Right ventricle myocardium inferior (tissue), 1 donor: ENCODE measurements at regions of chr17 and their contacts with region 1.

Region 1: GRCh38 chr17:46212634-46213435 is 19.6 kb upstream of the KANSL1 start:
- DNase-seq: no peak
- ATAC-seq: peak; percentile 77

Region 2: GRCh38 chr17:46002311-46002972 is 210.4 kb before region 1 on chr17:
- intact Hi-C with region 1: loop called (anchors 2 kb)
- DNase-seq: peak; percentile 85
- ATAC-seq: peak; percentile 81

Region 3: DNA sequence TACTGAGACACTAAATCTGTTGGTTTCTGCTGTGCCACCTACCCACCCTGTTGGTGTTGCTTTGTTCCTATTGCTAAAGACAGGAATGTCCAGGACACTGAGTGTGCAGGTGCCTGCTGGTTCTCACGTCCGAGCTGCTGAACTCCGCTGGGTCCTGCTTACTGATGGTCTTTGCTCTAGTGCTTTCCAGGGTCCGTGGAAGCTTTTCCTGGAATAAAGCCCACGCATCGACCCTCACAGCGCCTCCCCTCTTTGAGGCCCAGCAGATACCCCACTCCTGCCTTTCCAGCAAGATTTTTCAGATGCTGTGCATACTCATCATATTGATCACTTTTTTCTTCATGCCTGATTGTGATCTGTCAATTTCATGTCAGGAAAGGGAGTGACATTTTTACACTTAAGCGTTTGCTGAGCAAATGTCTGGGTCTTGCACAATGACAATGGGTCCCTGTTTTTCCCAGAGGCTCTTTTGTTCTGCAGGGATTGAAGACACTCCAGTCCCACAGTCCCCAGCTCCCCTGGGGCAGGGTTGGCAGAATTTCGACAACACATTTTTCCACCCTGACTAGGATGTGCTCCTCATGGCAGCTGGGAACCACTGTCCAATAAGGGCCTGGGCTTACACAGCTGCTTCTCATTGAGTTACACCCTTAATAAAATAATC is 199.2 kb before region 1 on chr17:
- intact Hi-C with region 1: no loop called
- DNase-seq: no peak
- ATAC-seq: no peak

Region 4: GRCh38 chr17:46044286-46044928 is 168.4 kb before region 1 on chr17:
- intact Hi-C with region 1: loop called (anchors 1 kb)
- DNase-seq: no peak
- ATAC-seq: peak; percentile 77

Region 5: DNA sequence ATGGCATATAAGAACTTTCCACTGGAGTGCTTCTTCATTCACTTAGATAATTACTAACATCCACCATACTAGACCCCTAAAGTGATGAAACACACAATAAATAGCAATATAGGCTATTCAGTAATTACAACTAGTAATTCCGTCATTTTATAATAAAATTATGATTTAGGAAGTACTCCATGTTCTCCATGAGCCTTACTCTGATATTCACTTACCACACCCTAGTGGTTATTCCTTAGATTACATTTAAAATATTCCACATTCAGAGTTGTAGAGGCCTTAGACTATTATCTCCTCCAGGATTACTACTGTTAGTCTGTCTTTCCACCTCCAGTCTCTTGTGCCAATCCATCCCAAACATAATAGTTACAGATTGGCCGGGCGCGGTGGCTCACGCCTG is 151.4 kb before region 1 on chr17:
- intact Hi-C with region 1: no loop called
- DNase-seq: no peak
- ATAC-seq: no peak

Region 6: GRCh38 chr17:46179375-46179999 is 33.3 kb before region 1 on chr17:
- intact Hi-C with region 1: no loop called
- DNase-seq: no peak
- ATAC-seq: peak; percentile 49